Psoas muscle (tissue), 8 donors: ENCODE measurements at regions of chr21 and their contacts with region 1.

Region 1: GRCh38 chr21:36069713-36070573 is at the start of gene CBR1:
- DNase-seq: peak; percentile 95
- ATAC-seq: peak; percentile 94 to 97 (median 97)
- H3K4me3 ChIP-seq: peak within 1 kb of the TSS; percentile 69
- H3K27ac ChIP-seq: peak within 1 kb of the TSS; percentile 65
- H3K4me1 ChIP-seq: peaks cover 31% of the 10 kb centered on the region
- H3K27me3 ChIP-seq: no peaks in the 10 kb centered on the region
- CTCF ChIP-seq: no peak
- total RNA-seq, gene CBR1: 15.2 to 47.7 (median 31.0) TPM

Region 2: DNA sequence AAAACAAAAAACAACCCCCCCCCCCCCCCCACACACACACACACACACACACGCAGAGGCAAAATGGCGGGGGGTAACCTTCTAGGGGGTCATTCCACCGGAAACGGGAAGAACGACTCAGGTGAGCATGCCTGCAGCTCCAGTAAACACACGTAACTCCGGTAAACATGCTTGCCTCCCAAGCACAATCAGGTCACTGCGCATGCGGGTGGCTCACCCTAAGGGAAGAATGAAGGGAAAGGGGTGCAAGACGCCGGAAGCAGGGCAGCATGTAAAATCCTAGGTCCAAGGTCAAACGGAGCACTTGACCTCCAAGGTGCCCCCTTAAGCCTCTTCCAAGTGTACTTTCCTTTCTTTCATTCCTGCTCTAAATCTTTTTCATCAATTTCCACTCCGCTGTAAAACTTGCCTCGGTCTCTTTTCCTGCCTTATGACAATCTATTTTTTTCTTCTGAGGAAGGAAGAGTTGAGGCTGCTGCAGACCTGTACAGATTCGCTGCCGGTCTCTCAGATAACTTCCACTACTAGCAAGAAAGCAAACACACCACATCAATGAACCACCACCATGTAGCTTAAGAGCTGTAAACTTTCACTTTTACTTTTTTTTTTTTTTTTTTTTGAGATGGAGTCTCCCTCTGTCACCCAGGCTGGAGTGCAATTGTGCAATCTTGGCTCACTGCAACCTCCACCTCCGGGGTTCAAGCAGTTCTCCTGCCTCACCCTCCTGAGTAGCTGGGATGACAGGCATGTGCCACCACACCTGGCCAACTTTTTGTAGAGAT is 43.9 kb after region 1 on chr21:
- intact Hi-C with region 1: loop called in 1 of 2 experiments (anchors 5 kb)
- DNase-seq: no peak
- ATAC-seq: peak in 2 of 4 donors; percentile 11 to 14
- H3K4me3 ChIP-seq: no peak overlapping the region
- H3K27ac ChIP-seq: no peak overlapping the region
- H3K4me1 ChIP-seq: peaks cover 3% of the 10 kb centered on the region
- H3K27me3 ChIP-seq: no peaks in the 10 kb centered on the region
- CTCF ChIP-seq: no peak